Activated CD4-positive, alpha-beta memory T cell treated with anti-CD3 and anti-CD28 coated beads for 36 hours (primary cell): ENCODE measurements at regions of chr10 and their contacts with region 1.

Region 1: DNA sequence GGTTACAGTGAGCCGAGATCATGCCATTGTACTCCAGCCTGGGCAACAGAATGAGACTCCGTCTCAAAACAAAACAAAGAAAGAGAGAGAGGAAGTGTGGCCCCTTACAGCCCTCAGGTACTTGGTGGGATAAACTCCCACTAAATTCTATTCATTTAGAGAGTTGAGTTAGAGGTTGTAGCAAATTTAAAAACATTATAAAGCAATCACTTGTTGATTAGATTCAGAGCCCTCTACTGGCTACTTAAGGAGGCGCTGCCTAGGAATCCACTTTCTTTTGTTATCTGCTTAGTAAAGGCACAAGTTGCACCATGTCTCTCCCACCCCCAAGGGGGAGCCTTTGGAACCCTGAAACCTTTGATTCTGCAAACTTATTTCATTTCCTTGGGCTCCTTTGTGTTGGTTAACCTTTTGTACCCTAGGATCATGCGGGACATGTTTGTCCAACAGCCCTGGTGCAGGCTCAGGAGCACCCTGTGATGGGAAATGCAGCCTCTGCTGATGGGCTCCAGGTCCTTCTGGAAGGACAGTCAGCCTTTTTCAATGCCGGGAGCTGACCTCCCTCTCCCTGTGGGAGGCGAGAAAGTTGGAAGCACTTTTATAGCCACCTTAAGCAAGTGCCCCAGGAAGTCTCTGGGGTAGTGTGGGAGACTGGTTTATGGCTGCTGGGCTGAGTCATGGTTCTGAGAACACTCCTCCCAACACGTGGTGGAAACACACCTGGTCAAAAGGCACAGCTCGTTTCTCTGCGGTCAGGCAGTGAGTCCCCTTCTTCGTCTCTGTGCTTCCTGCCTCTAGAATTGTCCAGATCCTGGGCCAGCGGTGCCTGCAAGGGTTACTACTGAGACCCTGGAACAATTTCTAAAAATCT is 2.3 kb downstream of the HKDC1 start:
- DNase-seq: peak; percentile 92
- H3K4me3 Mint-ChIP-seq: peak overlapping the region; percentile 55
- H3K27ac Mint-ChIP-seq: peak overlapping the region; percentile 91
- H3K4me1 Mint-ChIP-seq: peaks cover 44% of the 10 kb centered on the region
- H3K27me3 Mint-ChIP-seq: no peaks in the 10 kb centered on the region

Region 2: GRCh38 chr10:68955832-68956532 is 266.4 kb before region 1 on chr10 and contains the start of gene DDX21:
- CTCF ChIA-PET with region 1: interaction called, 3 read pairs
- POLR2A ChIA-PET with region 1: no interaction called
- intact Hi-C with region 1: loop called (anchors 5 kb)
- DNase-seq: peak; percentile 94
- H3K4me3 Mint-ChIP-seq: peak within 1 kb of the TSS; percentile 97
- H3K27ac Mint-ChIP-seq: peak within 1 kb of the TSS; percentile 99
- H3K4me1 Mint-ChIP-seq: peaks cover 39% of the 10 kb centered on the region
- H3K27me3 Mint-ChIP-seq: no peaks in the 10 kb centered on the region
- total RNA-seq, gene DDX21: 156 to 158 TPM

Region 3: GRCh38 chr10:69045441-69046300 is 176.7 kb before region 1 on chr10:
- CTCF ChIA-PET with region 1: no interaction called
- POLR2A ChIA-PET with region 1: no interaction called
- intact Hi-C with region 1: loop called (anchors 5 kb)
- DNase-seq: peak; percentile 68
- H3K4me3 Mint-ChIP-seq: peak overlapping the region; percentile 71
- H3K27ac Mint-ChIP-seq: peak overlapping the region; percentile 97
- H3K4me1 Mint-ChIP-seq: peaks cover 64% of the 10 kb centered on the region
- H3K27me3 Mint-ChIP-seq: no peaks in the 10 kb centered on the region

Region 4: DNA sequence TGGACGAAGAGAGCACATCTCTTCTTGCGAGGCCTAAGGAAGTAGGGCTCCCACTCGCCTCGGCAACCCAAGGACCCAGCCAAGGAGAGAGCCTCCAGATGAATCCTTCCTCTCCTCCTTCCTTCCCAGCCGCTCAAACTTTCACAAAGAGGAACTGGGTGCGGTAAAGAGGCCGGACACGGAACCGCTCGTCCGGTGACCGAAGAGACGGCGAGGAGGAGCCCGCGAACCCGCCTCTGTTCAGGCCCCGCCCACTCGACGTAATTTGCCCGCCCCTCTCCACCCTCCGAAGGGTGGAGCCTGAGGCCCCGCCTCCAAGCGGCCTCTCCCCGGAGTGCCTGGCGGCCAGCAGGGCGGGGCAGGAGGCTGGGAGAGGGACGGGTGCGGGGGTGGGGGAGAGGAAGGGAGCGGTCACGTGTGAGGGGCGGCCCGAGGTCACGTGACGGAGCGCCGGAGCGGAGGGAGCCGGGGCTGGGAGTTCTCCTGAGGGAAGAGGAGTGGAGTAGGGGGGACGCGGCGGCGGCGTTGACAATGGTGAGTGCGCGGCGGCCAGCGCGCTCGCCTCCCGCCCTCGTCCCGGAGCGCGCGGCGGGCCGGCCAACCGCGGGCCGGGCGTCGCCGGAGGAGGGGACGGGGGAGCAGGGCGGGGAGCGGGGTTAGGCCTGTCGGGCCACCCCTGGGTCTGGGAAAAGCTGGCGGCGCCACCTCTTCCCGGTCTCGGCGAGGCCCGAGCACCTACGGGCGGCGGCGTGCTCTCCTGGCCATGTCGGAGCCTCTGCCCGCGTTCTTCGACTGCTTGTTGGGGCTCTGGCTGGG is 98.4 kb before region 1 on chr10 and contains the start of gene VPS26A:
- CTCF ChIA-PET with region 1: no interaction called
- POLR2A ChIA-PET with region 1: interaction called, 3 read pairs
- intact Hi-C with region 1: loop called (anchors 1 kb)
- DNase-seq: peak; percentile 99
- H3K4me3 Mint-ChIP-seq: peak within 1 kb of the TSS; percentile 88
- H3K27ac Mint-ChIP-seq: peak within 1 kb of the TSS; percentile 92
- H3K4me1 Mint-ChIP-seq: peaks cover 25% of the 10 kb centered on the region
- H3K27me3 Mint-ChIP-seq: no peaks in the 10 kb centered on the region
- total RNA-seq, gene VPS26A: 44.6 to 51.4 TPM

Region 5: GRCh38 chr10:69202332-69202731 is 20.1 kb before region 1 on chr10:
- CTCF ChIA-PET with region 1: interaction called, 4 read pairs
- POLR2A ChIA-PET with region 1: no interaction called
- intact Hi-C with region 1: loop called (anchors 1 kb)
- DNase-seq: no peak
- H3K4me3 Mint-ChIP-seq: no peak overlapping the region
- H3K27ac Mint-ChIP-seq: peak overlapping the region; percentile 69
- H3K4me1 Mint-ChIP-seq: peaks cover 36% of the 10 kb centered on the region
- H3K27me3 Mint-ChIP-seq: no peaks in the 10 kb centered on the region

Region 6: GRCh38 chr10:69318106-69318866 is 95.9 kb after region 1 on chr10:
- CTCF ChIA-PET with region 1: no interaction called
- POLR2A ChIA-PET with region 1: interaction called, 4 read pairs
- intact Hi-C with region 1: loop called (anchors 5 kb)
- DNase-seq: peak; percentile 95
- H3K4me3 Mint-ChIP-seq: peak overlapping the region; percentile 99
- H3K27ac Mint-ChIP-seq: peak overlapping the region; percentile 97
- H3K4me1 Mint-ChIP-seq: peaks cover 50% of the 10 kb centered on the region
- H3K27me3 Mint-ChIP-seq: no peaks in the 10 kb centered on the region